HCT116 (cell line): ENCODE measurements at regions of chr1 and their contacts with region 1.

Region 1: DNA sequence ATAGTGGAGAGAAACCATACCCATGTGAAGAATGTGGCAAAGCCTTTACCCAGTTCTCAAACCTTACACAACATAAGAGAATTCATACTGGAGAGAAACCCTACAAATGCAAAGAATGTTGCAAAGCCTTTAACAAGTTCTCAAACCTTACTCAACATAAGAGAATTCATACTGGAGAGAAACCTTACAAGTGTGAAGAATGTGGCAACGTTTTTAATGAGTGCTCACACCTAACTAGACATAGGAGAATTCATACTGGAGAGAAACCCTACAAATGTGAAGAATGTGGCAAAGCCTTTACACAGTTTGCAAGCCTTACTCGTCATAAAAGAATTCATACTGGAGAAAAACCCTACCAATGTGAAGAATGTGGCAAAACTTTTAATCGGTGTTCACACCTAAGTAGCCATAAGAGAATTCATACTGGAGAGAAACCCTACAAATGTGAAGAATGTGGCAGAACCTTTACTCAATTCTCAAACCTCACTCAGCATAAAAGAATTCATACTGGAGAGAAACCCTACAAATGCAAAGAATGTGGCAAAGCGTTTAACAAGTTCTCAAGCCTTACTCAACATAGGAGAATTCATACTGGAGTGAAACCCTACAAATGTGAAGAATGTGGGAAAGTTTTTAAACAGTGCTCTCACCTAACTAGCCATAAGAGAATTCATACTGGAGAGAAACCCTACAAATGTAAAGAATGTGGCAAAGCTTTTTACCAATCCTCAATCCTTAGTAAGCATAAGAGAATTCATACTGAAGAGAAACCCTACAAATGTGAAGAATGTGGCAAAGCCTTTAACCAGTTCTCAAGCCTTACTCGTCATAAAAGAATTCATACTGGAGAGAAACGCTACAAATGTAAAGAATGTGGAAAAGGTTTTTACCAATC is 80.0 kb downstream of the JMJD4 start:
- DNase-seq: no peak
- ATAC-seq: no peak
- H3K4me3 ChIP-seq: no peak overlapping the region
- H3K27ac ChIP-seq: no peak overlapping the region
- H3K4me1 ChIP-seq: no peaks in the 10 kb centered on the region
- H3K27me3 ChIP-seq: no peaks in the 10 kb centered on the region
- CTCF ChIP-seq: no peak
- POLR2A ChIP-seq: no peak
- RAD21 ChIP-seq: no peak

Region 2: GRCh38 chr1:227604446-227604845 is 50.7 kb before region 1 on chr1:
- CTCF ChIA-PET with region 1: no interaction called
- POLR2A ChIA-PET with region 1: no interaction called
- RAD21 ChIA-PET with region 1: no interaction called
- intact Hi-C with region 1: loop called (anchors 10 kb)
- DNase-seq: no peak
- ATAC-seq: no peak
- H3K4me3 ChIP-seq: no peak overlapping the region
- H3K27ac ChIP-seq: no peak overlapping the region
- H3K4me1 ChIP-seq: no peaks in the 10 kb centered on the region
- H3K27me3 ChIP-seq: no peaks in the 10 kb centered on the region
- CTCF ChIP-seq: no peak
- POLR2A ChIP-seq: no peak
- RAD21 ChIP-seq: no peak